ENCODE measurements at regions of chr17 and their contacts with region 1.

Region 1: DNA sequence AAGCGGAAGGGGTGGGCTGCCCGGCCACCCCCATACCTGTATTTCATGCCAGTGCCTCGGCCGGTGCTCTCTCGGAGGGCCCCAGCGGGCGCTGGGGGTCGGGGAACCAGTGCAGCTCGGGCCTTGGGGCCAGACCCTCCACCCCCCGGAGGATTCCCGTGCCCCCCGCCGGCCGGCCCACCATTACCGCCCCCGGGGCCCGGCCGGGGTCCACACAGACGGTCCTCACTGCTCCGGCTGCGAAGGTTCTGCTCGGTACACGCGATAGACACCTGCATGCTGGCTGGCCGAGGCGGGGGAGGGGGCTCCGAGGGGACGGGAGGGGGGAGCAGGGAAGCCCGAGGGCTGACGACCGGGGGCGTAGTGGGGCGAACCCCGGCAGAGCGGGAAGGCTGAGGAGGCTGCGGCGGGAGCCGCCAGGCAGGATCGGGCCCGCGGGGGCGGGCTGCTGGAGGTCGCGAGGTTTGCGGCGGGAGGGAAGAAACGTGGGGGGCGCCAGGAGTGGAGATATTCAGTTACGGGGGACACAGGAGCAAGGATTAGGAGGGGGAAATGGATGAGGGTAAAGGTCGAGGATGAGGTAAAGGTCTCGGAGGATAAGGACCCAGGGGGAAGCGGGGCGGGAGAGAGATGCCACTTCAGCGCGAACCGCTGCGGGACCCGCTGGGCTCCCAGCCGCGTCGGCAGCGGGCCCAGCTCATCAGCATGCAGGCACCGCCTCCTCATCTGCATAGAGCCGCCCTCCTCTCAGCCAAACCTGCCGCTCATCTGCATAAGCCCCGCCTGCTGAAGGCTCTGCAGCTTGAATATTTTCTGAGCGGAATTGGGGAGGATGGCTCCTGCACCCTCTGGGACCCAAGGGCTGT is at the start of gene KCNAB3:
- DNase-seq: no peak
- H3K4me3 ChIP-seq: no peak within 1 kb of the TSS
- H3K27ac ChIP-seq: no peak within 1 kb of the TSS
- H3K4me1 ChIP-seq: peaks cover 20 to 23% of the 10 kb centered on the region in 2 donors
- H3K27me3 ChIP-seq: no peaks in the 10 kb centered on the region
- CTCF ChIP-seq: no peak
- POLR2A ChIP-seq: no peak
- total RNA-seq, gene KCNAB3: 0.40 to 3.7 (median 1.5) TPM

Region 2: DNA sequence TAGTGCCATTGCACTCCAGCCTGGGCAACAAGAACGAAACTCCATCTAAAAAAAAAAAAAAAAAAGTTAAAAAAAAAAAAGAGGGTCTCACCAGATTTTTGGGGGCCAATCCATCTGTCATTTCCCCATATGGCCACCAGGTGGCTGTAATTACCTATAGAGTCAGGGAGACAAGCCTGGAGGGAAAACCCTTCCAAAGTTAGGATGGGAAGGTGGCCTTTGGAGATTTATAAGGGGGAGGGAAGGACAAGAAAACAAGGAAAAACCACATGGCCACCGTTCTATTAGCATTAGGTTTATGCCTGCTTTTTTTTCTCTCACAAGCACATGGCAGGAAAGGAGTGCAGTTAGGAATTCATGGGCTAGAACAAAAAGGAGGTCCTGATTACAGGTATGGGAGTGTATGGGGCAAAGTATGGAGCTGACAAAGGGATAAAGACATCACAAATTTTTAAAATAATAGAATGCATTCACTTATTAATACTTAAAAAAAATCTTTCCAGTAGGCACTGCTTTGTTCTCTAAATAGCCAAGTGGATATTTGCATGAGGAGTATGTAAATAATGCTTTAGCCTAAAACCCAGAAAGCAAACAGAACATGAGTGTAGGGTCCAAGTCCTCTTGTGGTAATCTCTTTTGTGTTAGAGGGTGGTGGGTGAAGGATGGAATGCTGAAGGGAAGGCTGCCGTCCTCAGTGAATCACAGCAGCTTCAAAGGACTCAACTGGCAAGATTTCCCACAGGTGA is 66.5 kb before region 1 on chr17:
- intact Hi-C with region 1: loop called (anchors 5 kb)
- DNase-seq: peak; percentile 49 to 52
- H3K4me3 ChIP-seq: no peak overlapping the region
- H3K27ac ChIP-seq: no peak overlapping the region
- H3K4me1 ChIP-seq: peaks cover 10 to 11% of the 10 kb centered on the region in 2 donors
- H3K27me3 ChIP-seq: no peaks in the 10 kb centered on the region
- CTCF ChIP-seq: peak; percentile 64 to 92 (median 77)
- POLR2A ChIP-seq: no peak